ENCODE measurements at regions of chr10 and their contacts with region 1.

Region 1: DNA sequence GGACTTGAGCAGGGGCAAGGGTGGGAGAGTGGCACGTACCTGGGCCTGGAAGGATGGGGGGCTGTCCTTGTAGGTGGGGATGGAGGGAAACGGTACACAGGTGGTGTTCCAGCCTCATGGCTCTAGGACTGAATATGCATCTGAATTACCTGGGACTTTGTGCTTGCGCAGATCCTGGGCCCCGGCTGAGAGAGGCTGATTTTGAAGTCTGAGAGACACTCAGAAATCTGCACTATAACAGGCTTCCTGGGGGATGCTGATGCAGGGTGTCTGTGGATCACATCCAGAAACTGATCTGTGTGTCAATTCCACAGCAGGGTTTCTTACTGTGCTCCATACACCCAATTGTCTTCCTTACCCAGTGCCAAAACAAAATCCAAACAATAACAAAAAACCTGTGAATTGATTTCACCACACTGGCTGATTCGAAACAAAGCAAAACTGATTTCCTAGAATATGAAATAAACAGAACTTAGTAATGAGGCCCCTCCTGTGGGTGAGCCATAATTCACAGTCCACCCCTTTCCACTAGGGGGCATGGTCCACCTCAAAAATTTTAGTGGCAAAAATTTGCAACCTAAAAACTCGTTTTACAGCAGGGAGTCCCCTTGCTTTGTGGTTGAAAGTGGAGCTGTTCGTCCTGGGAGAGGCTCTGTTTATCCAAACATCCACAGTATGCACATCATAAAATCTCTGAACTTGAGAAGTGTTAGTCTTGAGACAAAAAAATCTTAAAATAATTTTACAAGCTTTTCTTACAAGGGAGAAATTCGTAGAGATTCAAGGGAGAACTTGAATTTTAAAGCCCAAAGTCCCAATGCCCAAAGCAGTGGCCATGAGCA is 32.0 kb upstream of the PLEKHA1 start:
- DNase-seq: peak; percentile 65
- ATAC-seq: peak; percentile 47
- H3K4me3 ChIP-seq: no peak overlapping the region
- H3K4me3 Mint-ChIP-seq: no peak overlapping the region
- H3K27ac ChIP-seq: no peak overlapping the region
- H3K27ac Mint-ChIP-seq: no peak overlapping the region
- H3K4me1 ChIP-seq: peaks cover 8 to 9% of the 10 kb centered on the region in 2 donors
- H3K4me1 Mint-ChIP-seq: peaks cover 11% of the 10 kb centered on the region
- H3K27me3 ChIP-seq: peaks cover 0 to 3% (median 1%) of the 10 kb centered on the region in 4 experiments
- H3K27me3 Mint-ChIP-seq: peaks cover 20% of the 10 kb centered on the region
- CTCF ChIP-seq: peak; percentile 82

Region 2: GRCh38 chr10:122298598-122299301 is 43.8 kb before region 1 on chr10:
- CTCF ChIA-PET with region 1: interaction called, 8 read pairs
- POLR2A ChIA-PET with region 1: interaction called, 3 read pairs
- intact Hi-C with region 1: loop called (anchors 1 kb)
- DNase-seq: peak; percentile 75
- ATAC-seq: peak; percentile 88
- H3K4me3 ChIP-seq: no peak overlapping the region
- H3K4me3 Mint-ChIP-seq: no peak overlapping the region
- H3K27ac ChIP-seq: no peak overlapping the region
- H3K27ac Mint-ChIP-seq: no peak overlapping the region
- H3K4me1 ChIP-seq: peaks cover 3 to 4% of the 10 kb centered on the region in 2 donors
- H3K4me1 Mint-ChIP-seq: peaks cover 3% of the 10 kb centered on the region
- H3K27me3 ChIP-seq: peaks cover 0 to 4% (median 0%) of the 10 kb centered on the region in 4 experiments
- H3K27me3 Mint-ChIP-seq: peaks cover 20% of the 10 kb centered on the region
- CTCF ChIP-seq: peak; percentile 91

Region 3: DNA sequence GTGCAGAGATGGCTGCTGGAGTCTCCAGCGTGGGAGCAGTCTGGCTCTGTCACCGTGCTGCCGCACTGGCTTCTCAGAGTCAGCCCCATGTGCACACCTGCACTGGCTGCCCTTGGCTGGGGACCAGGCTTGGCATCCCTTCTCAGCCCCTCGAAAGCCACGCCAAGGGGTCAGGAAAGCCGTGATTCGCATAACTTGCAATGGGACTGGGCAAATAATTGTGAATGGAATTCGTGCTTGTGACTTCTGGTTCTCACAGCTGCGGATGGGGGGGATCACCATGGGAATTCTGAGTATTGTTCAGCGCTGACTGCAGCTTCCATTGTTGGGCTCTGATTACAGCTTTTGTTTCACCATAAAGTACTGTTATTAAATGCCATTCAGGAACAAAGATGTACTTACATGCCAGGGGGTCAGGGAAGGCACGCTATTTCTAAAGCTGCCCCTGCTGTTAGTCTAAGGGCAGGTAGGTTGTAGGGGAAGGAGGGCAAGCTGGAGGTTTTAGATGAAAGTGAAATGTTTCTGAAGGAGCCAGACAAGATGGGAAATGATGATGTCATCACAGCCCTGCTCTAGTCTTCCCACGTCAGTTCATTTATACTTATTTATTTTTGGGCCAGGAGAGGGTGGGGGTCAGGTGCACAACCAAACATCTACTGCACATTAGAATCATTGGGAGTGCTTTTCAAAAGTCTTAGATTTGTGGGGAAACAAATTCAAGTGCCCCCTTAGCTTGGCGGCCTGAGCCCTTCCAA is 26.2 kb after region 1 on chr10:
- CTCF ChIA-PET with region 1: interaction called, 11 read pairs
- POLR2A ChIA-PET with region 1: interaction called, 10 read pairs
- intact Hi-C with region 1: no loop called
- DNase-seq: no peak
- ATAC-seq: no peak
- H3K4me3 ChIP-seq: no peak overlapping the region
- H3K4me3 Mint-ChIP-seq: no peak overlapping the region
- H3K27ac ChIP-seq: no peak overlapping the region
- H3K27ac Mint-ChIP-seq: peak overlapping the region; percentile 32
- H3K4me1 ChIP-seq: peaks cover 2 to 3% of the 10 kb centered on the region in 2 donors
- H3K4me1 Mint-ChIP-seq: peaks cover 3% of the 10 kb centered on the region
- H3K27me3 ChIP-seq: peaks cover 0 to 54% (median 25%) of the 10 kb centered on the region in 4 experiments
- H3K27me3 Mint-ChIP-seq: peaks cover 65% of the 10 kb centered on the region
- CTCF ChIP-seq: no peak

Region 4: GRCh38 chr10:122565728-122566206 is 223.3 kb after region 1 on chr10:
- CTCF ChIA-PET with region 1: interaction called, 22 read pairs
- POLR2A ChIA-PET with region 1: no interaction called
- intact Hi-C with region 1: no loop called
- DNase-seq: peak; percentile 52
- ATAC-seq: no peak
- H3K4me3 ChIP-seq: no peak overlapping the region
- H3K4me3 Mint-ChIP-seq: no peak overlapping the region
- H3K27ac ChIP-seq: no peak overlapping the region
- H3K27ac Mint-ChIP-seq: no peak overlapping the region
- H3K4me1 ChIP-seq: no peaks in the 10 kb centered on the region
- H3K4me1 Mint-ChIP-seq: no peaks in the 10 kb centered on the region
- H3K27me3 ChIP-seq: peaks cover 0 to 16% (median 4%) of the 10 kb centered on the region in 4 experiments
- H3K27me3 Mint-ChIP-seq: peaks cover 39% of the 10 kb centered on the region
- CTCF ChIP-seq: peak; percentile 62

Region 5: GRCh38 chr10:123559066-123559822 is 1216.7 kb after region 1 on chr10:
- CTCF ChIA-PET with region 1: no interaction called
- POLR2A ChIA-PET with region 1: no interaction called
- intact Hi-C with region 1: loop called (anchors 10 kb)
- DNase-seq: peak; percentile 71
- ATAC-seq: peak; percentile 67
- H3K4me3 ChIP-seq: no peak overlapping the region
- H3K4me3 Mint-ChIP-seq: no peak overlapping the region
- H3K27ac ChIP-seq: no peak overlapping the region
- H3K27ac Mint-ChIP-seq: no peak overlapping the region
- H3K4me1 ChIP-seq: peaks cover 3 to 5% of the 10 kb centered on the region in 2 donors
- H3K4me1 Mint-ChIP-seq: no peaks in the 10 kb centered on the region
- H3K27me3 ChIP-seq: peaks cover 0 to 9% (median 0%) of the 10 kb centered on the region in 4 experiments
- H3K27me3 Mint-ChIP-seq: peaks cover 15% of the 10 kb centered on the region
- CTCF ChIP-seq: peak; percentile 98

Measured in B cell (primary cell).